ENCODE measurements at regions of chr10 and their contacts with region 1.

Region 1: DNA sequence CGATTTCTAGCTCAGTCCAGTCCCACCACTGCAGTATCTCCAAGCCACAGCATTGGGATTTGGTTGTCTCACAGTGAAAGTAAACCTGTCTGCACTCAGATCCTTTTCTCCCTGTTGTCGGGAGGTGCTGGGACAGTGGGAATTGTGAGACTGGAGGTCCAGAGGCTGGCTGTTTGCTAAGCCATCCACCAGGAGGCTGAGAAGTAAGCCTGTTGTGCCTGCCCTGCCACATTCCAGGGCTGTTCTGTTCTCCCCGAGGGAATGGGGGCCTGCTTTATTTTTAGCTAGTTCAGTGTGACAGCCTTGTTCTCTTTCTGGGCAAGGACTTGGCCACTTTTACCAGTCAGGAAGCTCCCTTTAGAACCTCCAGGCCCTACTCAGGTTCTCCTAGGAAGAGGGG is 54.9 kb downstream of the HK1 start:
- DNase-seq: no peak
- ATAC-seq: peak; percentile 35 to 71

Region 2: DNA sequence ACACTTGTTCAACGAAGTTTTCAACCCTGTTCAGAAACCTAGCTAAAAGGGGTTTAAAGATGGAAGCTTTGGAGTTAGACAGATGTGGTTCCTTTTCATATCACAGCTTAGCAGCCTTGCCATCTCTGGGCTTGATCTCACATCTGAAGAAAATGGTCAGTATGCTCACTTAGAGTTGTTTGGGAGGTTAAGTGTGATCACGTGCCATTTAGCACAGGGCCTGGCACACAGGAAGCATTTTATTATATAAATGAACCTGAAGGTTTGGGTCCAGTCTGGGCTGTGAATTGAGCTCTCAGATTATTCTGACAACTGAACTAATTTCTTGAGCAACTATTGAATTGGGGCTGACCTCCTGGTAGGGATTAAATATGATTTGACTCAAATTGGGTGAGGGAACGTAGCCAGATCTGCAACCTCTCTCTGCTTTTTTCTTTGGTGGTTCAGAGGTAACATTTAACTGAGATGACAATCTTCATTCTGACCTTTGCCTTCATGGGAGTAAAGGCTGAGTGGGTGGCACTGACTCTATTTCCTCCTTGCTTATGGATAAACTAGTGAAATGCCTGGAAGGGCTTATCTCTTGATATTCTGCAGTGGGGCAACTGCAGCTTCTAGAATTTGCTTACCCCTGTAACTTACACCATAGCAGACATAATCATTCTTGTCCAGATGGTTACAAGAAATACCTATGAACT is 123.3 kb before region 1 on chr10:
- intact Hi-C with region 1: no loop called
- DNase-seq: no peak
- ATAC-seq: no peak

Region 3: GRCh38 chr10:69290993-69291392 is 42.2 kb before region 1 on chr10:
- intact Hi-C with region 1: no loop called
- DNase-seq: no peak
- ATAC-seq: peak in 1 of 2 donors; percentile 77

Region 4: GRCh38 chr10:69375307-69376151 is 42.3 kb after region 1 on chr10:
- intact Hi-C with region 1: loop called in 1 of 2 experiments (anchors 5 kb)
- DNase-seq: peak; percentile 52
- ATAC-seq: peak; percentile 89 to 94